ENCODE measurements at regions of chr11 and their contacts with region 1.

Region 1: DNA sequence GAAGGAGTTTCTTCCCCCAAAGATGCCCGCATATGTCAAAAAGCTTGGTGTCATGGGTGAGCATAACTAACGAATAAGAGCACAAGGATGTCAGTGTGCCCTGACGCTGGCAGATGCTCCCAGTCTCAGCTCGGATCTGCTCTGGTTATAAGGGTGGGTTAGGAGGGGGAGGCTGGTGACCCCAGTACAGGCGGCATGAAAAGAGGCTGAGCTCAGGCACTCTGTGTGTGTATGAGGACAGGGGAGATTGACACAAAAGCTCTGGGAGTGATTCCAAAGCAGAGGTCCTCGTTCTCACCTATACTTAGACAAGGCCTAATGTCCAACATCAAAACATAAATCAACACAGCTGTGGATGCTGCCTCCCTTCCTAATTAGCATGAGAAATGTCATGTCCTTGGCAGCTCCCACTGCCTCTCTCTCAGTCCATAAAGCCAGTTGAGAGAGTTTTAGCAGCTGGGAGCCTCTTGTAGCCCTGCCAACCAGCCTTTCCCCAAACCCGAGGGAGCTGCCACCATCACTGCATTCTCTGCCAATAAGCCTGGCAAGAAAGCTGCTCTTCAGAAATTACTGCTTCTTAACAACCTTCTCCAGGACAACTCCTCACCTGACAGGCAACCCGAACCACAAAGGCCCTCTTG is 59.8 kb downstream of the SC5D start:
- DNase-seq: no peak
- H3K4me3 Mint-ChIP-seq: no peak overlapping the region
- H3K27ac Mint-ChIP-seq: no peak overlapping the region
- H3K4me1 Mint-ChIP-seq: no peaks in the 10 kb centered on the region
- H3K27me3 Mint-ChIP-seq: peaks cover 3% of the 10 kb centered on the region

Region 2: GRCh38 chr11:121132196-121132976 is 220.0 kb before region 1 on chr11:
- CTCF ChIA-PET with region 1: no interaction called
- POLR2A ChIA-PET with region 1: no interaction called
- DNase-seq: no peak
- H3K4me3 Mint-ChIP-seq: no peak overlapping the region
- H3K27ac Mint-ChIP-seq: no peak overlapping the region
- H3K4me1 Mint-ChIP-seq: no peaks in the 10 kb centered on the region
- H3K27me3 Mint-ChIP-seq: no peaks in the 10 kb centered on the region

Region 3: DNA sequence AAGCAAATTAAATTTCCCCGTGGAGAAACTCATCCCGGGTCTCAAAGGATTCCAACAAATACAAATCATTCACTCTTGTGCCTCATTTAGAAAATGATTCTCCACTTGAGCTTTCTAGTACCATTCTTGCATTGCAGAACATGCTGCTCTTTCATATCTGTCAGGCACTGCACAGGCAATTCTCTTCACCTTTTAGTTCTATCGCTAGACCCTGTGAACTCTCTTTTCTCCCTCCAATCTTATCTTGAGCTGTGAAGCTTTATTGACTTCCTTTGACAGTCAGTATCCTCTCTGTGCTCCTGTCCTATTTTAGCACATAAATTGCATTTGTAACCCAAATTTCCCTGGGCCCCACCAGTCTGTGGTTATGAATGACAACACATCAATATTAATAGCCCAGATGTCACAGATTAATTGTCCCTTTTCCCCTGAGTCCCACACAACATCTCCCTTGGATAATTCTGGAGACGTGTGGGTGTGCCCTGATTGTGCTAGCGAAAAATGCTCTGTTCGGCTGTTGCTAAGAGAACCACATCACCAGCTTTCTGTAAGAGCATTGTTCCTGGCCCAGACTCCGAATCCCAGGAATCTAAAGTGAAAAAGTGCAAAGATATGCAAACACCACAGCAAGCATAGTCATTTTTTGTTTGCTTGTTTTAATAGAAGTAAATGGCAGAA is 82.2 kb before region 1 on chr11:
- CTCF ChIA-PET with region 1: no interaction called
- POLR2A ChIA-PET with region 1: no interaction called
- DNase-seq: no peak
- H3K4me3 Mint-ChIP-seq: no peak overlapping the region
- H3K27ac Mint-ChIP-seq: no peak overlapping the region
- H3K4me1 Mint-ChIP-seq: peaks cover 4% of the 10 kb centered on the region
- H3K27me3 Mint-ChIP-seq: peaks cover 38% of the 10 kb centered on the region

Region 4: GRCh38 chr11:121337740-121338272 is 14.6 kb before region 1 on chr11:
- CTCF ChIA-PET with region 1: interaction called, 12 read pairs
- POLR2A ChIA-PET with region 1: no interaction called
- DNase-seq: no peak
- H3K4me3 Mint-ChIP-seq: no peak overlapping the region
- H3K27ac Mint-ChIP-seq: no peak overlapping the region
- H3K4me1 Mint-ChIP-seq: peaks cover 60% of the 10 kb centered on the region
- H3K27me3 Mint-ChIP-seq: peaks cover 3% of the 10 kb centered on the region

Measured in activated CD4-positive, alpha-beta T cell treated with anti-CD3 and anti-CD28 coated beads, Interleukin-2, amount 10 ng/mL, durations not matched to agents 7 days and 5 days (primary cell).